ENCODE measurements at regions of chr9 and their contacts with region 1.

Region 1: GRCh38 chr9:116860509-116861120 is 173.5 kb downstream of the TRIM32 start:
- DNase-seq: peak in 1 of 2 experiments; percentile 88
- H3K4me3 ChIP-seq: no peak overlapping the region
- H3K27ac ChIP-seq: no peak overlapping the region
- H3K4me1 ChIP-seq: peaks cover 0 to 4% (median 0%) of the 10 kb centered on the region in 4 experiments; a peak in 2 of 7 replicates
- H3K27me3 ChIP-seq: no peaks in the 10 kb centered on the region
- CTCF ChIP-seq: peak; percentile 82 to 95 (median 87)
- EP300 ChIP-seq: no peak
- POLR2A ChIP-seq: no peak
- RAD21 ChIP-seq: peak; percentile 84 to 90

Region 2: GRCh38 chr9:116724123-116724522 is 136.5 kb before region 1 on chr9:
- CTCF ChIA-PET with region 1: interaction called, 27 read pairs
- POLR2A ChIA-PET with region 1: interaction called, 3 read pairs
- DNase-seq: no peak
- H3K4me3 ChIP-seq: no peak overlapping the region
- H3K27ac ChIP-seq: no peak overlapping the region
- H3K4me1 ChIP-seq: no peaks in the 10 kb centered on the region
- H3K27me3 ChIP-seq: no peaks in the 10 kb centered on the region
- CTCF ChIP-seq: no peak
- EP300 ChIP-seq: no peak
- POLR2A ChIP-seq: no peak
- RAD21 ChIP-seq: no peak

Region 3: DNA sequence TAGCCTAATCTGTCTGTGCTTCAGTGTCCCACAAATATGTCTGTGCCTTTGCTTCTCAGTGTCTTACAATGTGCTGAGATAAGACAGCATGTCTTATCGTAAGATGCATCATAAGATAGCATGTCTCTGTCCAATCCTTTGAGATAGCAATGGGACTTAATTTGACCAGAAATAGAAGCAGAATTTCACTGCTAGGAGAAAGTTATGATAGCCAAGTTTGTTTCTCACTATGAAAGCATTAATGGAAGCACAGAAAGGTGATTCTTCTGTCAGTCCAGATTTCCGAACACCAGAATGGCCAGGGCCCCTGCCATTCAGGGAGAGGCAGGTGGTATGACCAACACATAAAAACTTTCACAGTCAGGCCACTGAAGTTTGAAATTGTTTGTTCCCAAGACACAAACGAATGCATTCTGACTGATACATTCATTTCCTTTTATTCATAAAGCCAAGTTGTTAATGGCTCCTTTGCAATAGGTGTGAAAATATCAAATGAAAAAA is 62.0 kb before region 1 on chr9:
- CTCF ChIA-PET with region 1: interaction called, 16 read pairs
- POLR2A ChIA-PET with region 1: no interaction called
- DNase-seq: no peak
- H3K4me3 ChIP-seq: no peak overlapping the region
- H3K27ac ChIP-seq: no peak overlapping the region
- H3K4me1 ChIP-seq: peaks cover 0 to 12% (median 9%) of the 10 kb centered on the region in 4 experiments; a peak in 5 of 7 replicates
- H3K27me3 ChIP-seq: no peaks in the 10 kb centered on the region
- CTCF ChIP-seq: no peak
- EP300 ChIP-seq: no peak
- POLR2A ChIP-seq: no peak
- RAD21 ChIP-seq: no peak

Region 4: GRCh38 chr9:116812231-116813030 is 48.2 kb before region 1 on chr9:
- CTCF ChIA-PET with region 1: interaction called, 10 read pairs
- POLR2A ChIA-PET with region 1: no interaction called
- DNase-seq: no peak
- H3K4me3 ChIP-seq: no peak overlapping the region
- H3K27ac ChIP-seq: no peak overlapping the region
- H3K4me1 ChIP-seq: peaks cover 0 to 2% (median 0%) of the 10 kb centered on the region in 4 experiments; a peak in 2 of 7 replicates
- H3K27me3 ChIP-seq: no peaks in the 10 kb centered on the region
- CTCF ChIP-seq: no peak
- EP300 ChIP-seq: no peak
- POLR2A ChIP-seq: no peak
- RAD21 ChIP-seq: no peak

Region 5: DNA sequence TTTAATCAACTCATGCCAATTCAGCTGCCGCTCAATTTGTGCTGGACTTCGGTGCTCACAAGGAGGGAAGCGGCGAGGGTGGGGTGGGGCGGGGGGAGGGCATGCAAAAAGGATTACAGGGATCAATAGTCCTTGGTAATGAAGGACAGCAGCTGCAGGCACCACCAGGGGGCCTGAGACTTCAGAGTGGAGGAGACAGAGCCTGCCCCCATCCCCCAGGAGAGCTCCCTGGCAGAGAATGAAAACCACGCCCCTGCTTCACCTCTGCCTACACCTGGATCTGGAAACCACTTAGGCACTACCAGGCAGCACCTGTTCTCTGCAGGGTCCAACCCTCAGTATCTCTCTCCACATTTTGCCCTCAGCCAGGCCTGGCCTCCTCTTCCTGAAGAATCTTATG is 18.0 kb before region 1 on chr9:
- CTCF ChIA-PET with region 1: interaction called, 37 read pairs
- POLR2A ChIA-PET with region 1: interaction called, 3 read pairs
- DNase-seq: peak; percentile 39 to 63
- H3K4me3 ChIP-seq: no peak overlapping the region
- H3K27ac ChIP-seq: no peak overlapping the region
- H3K4me1 ChIP-seq: peaks cover 1 to 15% (median 11%) of the 10 kb centered on the region in 4 experiments; a peak in 6 of 7 replicates
- H3K27me3 ChIP-seq: no peaks in the 10 kb centered on the region
- CTCF ChIP-seq: peak; percentile 34 to 40 (median 38)
- EP300 ChIP-seq: no peak
- POLR2A ChIP-seq: no peak
- RAD21 ChIP-seq: peak; percentile 28 to 46; a peak in 2 of 4 replicates

Region 6: GRCh38 chr9:116905111-116905720 is 44.6 kb after region 1 on chr9:
- CTCF ChIA-PET with region 1: interaction called, 11 read pairs
- POLR2A ChIA-PET with region 1: no interaction called
- DNase-seq: no peak
- H3K4me3 ChIP-seq: no peak overlapping the region
- H3K27ac ChIP-seq: no peak overlapping the region
- H3K4me1 ChIP-seq: peaks cover 0 to 9% (median 1%) of the 10 kb centered on the region in 4 experiments; a peak in 2 of 7 replicates
- H3K27me3 ChIP-seq: no peaks in the 10 kb centered on the region
- CTCF ChIP-seq: no peak
- EP300 ChIP-seq: no peak
- POLR2A ChIP-seq: no peak
- RAD21 ChIP-seq: no peak

Region 7: GRCh38 chr9:117050007-117050406 is 189.4 kb after region 1 on chr9:
- CTCF ChIA-PET with region 1: no interaction called
- POLR2A ChIA-PET with region 1: no interaction called
- DNase-seq: no peak
- H3K4me3 ChIP-seq: no peak overlapping the region
- H3K27ac ChIP-seq: no peak overlapping the region
- H3K4me1 ChIP-seq: no peaks in the 10 kb centered on the region
- H3K27me3 ChIP-seq: no peaks in the 10 kb centered on the region
- CTCF ChIP-seq: no peak
- EP300 ChIP-seq: no peak
- POLR2A ChIP-seq: no peak
- RAD21 ChIP-seq: no peak